ENCODE measurements at regions of chr2 and their contacts with region 1.

Region 1: DNA sequence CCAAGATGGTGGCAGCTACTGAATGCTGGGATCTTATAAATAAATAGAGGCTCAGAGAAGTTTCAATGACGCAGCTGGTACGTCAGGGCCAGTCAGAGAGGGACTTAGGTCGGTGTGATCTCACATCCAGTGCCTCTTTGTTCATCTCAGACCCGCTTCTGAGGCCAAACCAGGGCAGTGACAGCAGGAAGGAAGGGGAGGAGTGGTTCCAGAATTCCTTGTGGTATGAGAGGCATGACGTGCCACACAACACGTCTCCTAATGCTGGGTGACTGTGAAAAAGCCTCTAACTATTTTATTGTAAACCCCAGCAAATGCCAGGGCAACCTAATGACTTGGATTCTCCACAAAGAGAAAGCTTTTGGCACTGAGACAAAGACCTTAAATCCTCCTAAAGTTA is 423.3 kb downstream of the LPIN1 start:
- DNase-seq: no peak
- H3K4me3 ChIP-seq: no peak overlapping the region
- H3K27ac ChIP-seq: peak overlapping the region; percentile 60 to 67 (median 64)
- H3K4me1 ChIP-seq: peaks cover 26 to 34% (median 30%) of the 10 kb centered on the region in 4 donors
- H3K27me3 ChIP-seq: no peaks in the 10 kb centered on the region
- CTCF ChIP-seq: no peak
- EP300 ChIP-seq: no peak
- POLR2A ChIP-seq: no peak

Region 2: DNA sequence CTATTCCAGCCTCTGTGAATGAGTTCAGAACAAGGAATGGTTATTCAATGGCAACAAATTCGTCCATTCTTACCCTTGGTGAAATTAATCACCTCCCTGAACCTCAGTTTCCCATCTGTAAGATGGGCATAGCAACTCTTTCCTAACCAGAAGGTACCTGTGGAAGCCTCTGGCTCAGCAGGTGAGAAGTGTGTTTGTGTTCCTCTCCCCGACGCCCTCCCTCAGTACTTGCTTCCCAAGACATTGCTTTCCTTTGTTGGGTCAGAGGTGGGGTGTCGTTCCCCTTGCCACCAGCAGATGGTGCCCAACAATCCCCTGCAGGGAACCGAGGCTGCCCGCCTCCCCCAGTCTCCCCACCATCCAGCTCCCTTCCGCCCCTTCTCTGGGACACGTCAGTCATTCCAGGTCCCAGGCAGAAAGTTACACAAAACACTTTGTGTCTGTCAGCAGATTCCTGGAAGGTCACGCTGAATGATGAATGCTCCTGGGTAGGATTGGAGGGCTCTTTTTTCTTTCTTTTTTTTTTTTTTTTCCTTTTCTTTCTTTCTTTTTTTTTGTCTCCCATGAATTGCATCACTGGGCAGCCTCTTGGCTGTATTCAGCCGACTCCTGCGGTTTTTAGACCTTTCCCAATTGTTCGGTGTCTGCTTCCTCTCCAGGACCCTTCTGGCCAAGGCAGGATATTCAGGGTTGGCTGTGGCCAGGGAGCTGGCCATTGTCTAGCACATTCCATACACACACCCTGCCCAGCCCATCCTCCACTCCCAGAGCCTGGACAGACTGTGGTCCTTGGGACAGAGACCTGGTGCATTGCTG is 306.0 kb before region 1 on chr2:
- intact Hi-C with region 1: loop called (anchors 10 kb)
- DNase-seq: peak; percentile 94
- H3K4me3 ChIP-seq: peak overlapping the region in 3 of 4 donors; percentile 10 to 29 (median 21)
- H3K27ac ChIP-seq: peak overlapping the region; percentile 13 to 42 (median 34)
- H3K4me1 ChIP-seq: peaks cover 13 to 19% (median 15%) of the 10 kb centered on the region in 4 donors
- H3K27me3 ChIP-seq: no peaks in the 10 kb centered on the region
- CTCF ChIP-seq: peak in 2 of 3 experiments; percentile 92 to 97
- EP300 ChIP-seq: no peak
- POLR2A ChIP-seq: no peak

Measured in esophagus muscularis mucosa (tissue), 4 donors.